Astrocyte of the cerebellum (primary cell): ENCODE measurements at regions of chr11 and their contacts with region 1.

Region 1: DNA sequence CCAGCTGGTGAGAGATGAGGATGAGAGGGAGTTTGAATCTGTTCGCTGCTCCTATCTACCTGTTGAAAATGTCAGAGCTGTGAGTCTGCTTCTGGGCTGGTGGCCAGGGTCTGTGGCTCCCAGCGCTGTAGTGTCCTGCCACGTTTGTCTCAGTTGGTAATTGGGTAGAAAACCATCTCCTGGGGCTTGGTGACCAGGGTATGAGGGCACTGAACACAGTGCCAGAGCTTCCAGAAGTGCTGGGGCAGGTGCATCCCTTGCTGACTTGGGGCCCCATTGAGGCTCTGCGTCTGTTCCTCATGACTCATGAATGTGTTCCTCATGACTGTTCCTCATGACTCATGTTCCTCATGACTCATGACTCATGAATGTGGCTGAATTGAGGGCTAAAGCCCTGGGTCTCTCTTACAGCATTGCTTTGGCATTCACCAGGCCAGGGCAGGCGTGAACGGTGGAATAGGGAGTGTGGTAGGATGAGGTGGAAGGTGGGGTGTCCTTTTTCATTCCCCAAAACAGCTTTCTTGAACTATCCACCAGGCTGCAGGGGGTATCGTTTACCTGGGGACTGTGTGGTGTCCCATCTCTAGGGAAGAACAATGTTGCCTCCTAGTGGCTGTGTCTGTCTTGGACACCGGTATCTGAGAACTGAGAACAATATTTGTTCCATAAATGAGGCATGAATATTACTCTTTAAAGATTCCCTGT is 139.5 kb downstream of the COMMD9 start:
- DNase-seq: peak; percentile 98
- H3K4me3 ChIP-seq: no peak overlapping the region
- CTCF ChIP-seq: peak; percentile 60

Region 2: GRCh38 chr11:36265793-36266628 is 116.3 kb after region 1 on chr11:
- in situ Hi-C with region 1: loop called (anchors 25 kb)
- DNase-seq: peak; percentile 19
- H3K4me3 ChIP-seq: no peak overlapping the region
- CTCF ChIP-seq: peak; percentile 87

Region 3: GRCh38 chr11:36724742-36725385 is 575.2 kb after region 1 on chr11:
- in situ Hi-C with region 1: no loop called
- DNase-seq: no peak
- H3K4me3 ChIP-seq: no peak overlapping the region
- CTCF ChIP-seq: no peak